ENCODE measurements at regions of chr7 and their contacts with region 1.

Region 1: DNA sequence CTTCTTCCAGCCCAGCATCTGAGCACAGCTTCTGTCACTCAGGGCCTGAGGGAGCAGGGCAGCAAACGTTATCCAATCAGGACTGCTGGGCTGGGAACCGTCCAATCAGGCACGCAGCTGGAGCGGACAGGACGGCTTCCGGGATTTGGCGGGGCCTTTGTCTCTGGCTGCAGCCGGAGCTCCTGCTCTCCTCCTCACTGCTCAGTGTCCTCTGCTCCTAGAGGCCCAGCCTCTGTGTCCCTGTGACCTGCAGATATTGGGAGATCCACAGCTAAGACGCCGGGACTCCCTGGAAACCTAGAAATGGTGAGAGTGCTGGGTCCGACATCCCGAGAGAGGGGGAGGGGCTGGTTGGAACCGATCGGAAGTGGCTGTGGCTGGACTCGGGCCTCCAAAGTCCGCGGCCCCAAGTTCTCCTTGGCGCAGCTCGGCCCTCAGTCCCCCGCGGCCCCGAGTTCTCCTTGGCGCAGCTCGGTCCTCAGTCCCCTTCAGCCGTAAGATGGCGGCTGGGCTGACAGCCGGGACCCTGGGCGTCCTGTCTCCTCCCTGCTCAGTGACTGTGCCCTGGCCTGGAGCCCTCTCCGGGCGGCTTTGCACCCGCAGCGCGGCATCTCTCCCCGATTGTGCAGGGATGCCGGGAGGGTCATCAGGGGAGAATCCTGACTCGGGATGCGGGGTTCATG is at the start of gene ZNF107:
- DNase-seq: peak; percentile 90
- ATAC-seq: peak; percentile 99
- H3K4me3 ChIP-seq: peak within 1 kb of the TSS; percentile 78 to 83
- H3K27ac ChIP-seq: peak within 1 kb of the TSS; percentile 60
- H3K4me1 ChIP-seq: peaks cover 5 to 11% of the 10 kb centered on the region in 2 experiments; a peak in 3 of 4 replicates
- H3K27me3 ChIP-seq: no peaks in the 10 kb centered on the region
- CTCF ChIP-seq: no peak
- POLR2A ChIP-seq: no peak
- RAD21 ChIP-seq: no peak
- total RNA-seq, gene ZNF107: 6.2 TPM

Region 2: GRCh38 chr7:64562626-64563275 is 103.4 kb before region 1 on chr7 and contains the start of gene ZNF680:
- CTCF ChIA-PET with region 1: no interaction called
- POLR2A ChIA-PET with region 1: no interaction called
- RAD21 ChIA-PET with region 1: no interaction called
- intact Hi-C with region 1: loop called (anchors 5 kb)
- DNase-seq: peak; percentile 91
- ATAC-seq: peak; percentile 99
- H3K4me3 ChIP-seq: peak within 1 kb of the TSS; percentile 91 to 93
- H3K27ac ChIP-seq: peak within 1 kb of the TSS; percentile 75
- H3K4me1 ChIP-seq: peaks cover 0 to 5% of the 10 kb centered on the region in 2 experiments; a peak in 1 of 4 replicates
- H3K27me3 ChIP-seq: no peaks in the 10 kb centered on the region
- CTCF ChIP-seq: no peak
- POLR2A ChIP-seq: peak; percentile 78
- RAD21 ChIP-seq: no peak
- total RNA-seq, gene ZNF680: 11.2 TPM

Region 3: GRCh38 chr7:64706625-64707292 is 40.6 kb after region 1 on chr7:
- CTCF ChIA-PET with region 1: no interaction called
- POLR2A ChIA-PET with region 1: no interaction called
- RAD21 ChIA-PET with region 1: no interaction called
- intact Hi-C with region 1: loop called (anchors 5 kb)
- DNase-seq: no peak
- ATAC-seq: no peak
- H3K4me3 ChIP-seq: no peak overlapping the region
- H3K27ac ChIP-seq: no peak overlapping the region
- H3K4me1 ChIP-seq: no peaks in the 10 kb centered on the region
- H3K27me3 ChIP-seq: no peaks in the 10 kb centered on the region
- CTCF ChIP-seq: no peak
- POLR2A ChIP-seq: no peak
- RAD21 ChIP-seq: no peak

Region 4: GRCh38 chr7:64794171-64794844 is 128.2 kb after region 1 on chr7 and contains the start of gene ZNF138:
- CTCF ChIA-PET with region 1: no interaction called
- POLR2A ChIA-PET with region 1: no interaction called
- RAD21 ChIA-PET with region 1: no interaction called
- intact Hi-C with region 1: loop called (anchors 5 kb)
- DNase-seq: peak; percentile 92
- ATAC-seq: peak; percentile 100
- H3K4me3 ChIP-seq: peak within 1 kb of the TSS; percentile 77 to 95
- H3K27ac ChIP-seq: peak within 1 kb of the TSS; percentile 70
- H3K4me1 ChIP-seq: peaks cover 5 to 14% of the 10 kb centered on the region in 2 experiments; a peak in 3 of 4 replicates
- H3K27me3 ChIP-seq: no peaks in the 10 kb centered on the region
- CTCF ChIP-seq: no peak
- POLR2A ChIP-seq: peak; percentile 71
- RAD21 ChIP-seq: no peak
- total RNA-seq, gene ZNF138: 10.1 TPM

Region 5: GRCh38 chr7:64902806-64903721 is 236.9 kb after region 1 on chr7 and contains the start of gene ZNF273:
- CTCF ChIA-PET with region 1: no interaction called
- POLR2A ChIA-PET with region 1: no interaction called
- RAD21 ChIA-PET with region 1: no interaction called
- intact Hi-C with region 1: loop called (anchors 2 kb)
- DNase-seq: peak; percentile 80
- ATAC-seq: peak; percentile 99
- H3K4me3 ChIP-seq: peak within 1 kb of the TSS; percentile 72 to 86
- H3K27ac ChIP-seq: peak within 1 kb of the TSS; percentile 44
- H3K4me1 ChIP-seq: peaks cover 3 to 14% of the 10 kb centered on the region in 2 experiments; a peak in 3 of 4 replicates
- H3K27me3 ChIP-seq: no peaks in the 10 kb centered on the region
- CTCF ChIP-seq: no peak
- POLR2A ChIP-seq: peak; percentile 75
- RAD21 ChIP-seq: no peak
- total RNA-seq, gene ZNF273: 6.6 TPM

Region 6: DNA sequence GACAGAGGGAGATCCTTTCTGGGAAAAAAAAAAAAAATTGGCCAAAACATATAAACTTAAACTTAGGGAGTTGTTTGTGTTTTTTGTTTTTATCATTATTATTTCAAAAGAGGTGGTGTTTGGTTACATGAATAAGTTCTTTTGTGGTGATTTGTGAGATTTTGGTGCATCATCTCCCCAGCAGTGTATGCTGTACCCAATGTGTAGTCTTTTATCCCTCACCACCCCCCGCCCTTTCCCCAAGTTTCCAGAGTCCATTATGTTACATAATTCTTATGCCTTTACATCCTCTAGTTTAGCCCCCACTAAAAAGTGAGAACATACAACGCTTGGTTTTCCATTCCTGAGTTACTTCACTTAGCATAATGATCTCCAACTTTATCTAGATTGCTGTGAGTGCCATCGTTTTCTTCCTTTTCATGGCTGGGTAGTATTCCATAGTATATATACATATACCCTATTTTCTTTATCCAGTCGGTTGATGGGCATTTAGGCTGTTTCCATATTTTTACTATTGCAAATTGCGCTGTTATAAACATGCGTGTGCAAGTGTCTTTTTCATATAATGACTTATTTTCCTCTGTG is 559.4 kb after region 1 on chr7:
- CTCF ChIA-PET with region 1: no interaction called
- POLR2A ChIA-PET with region 1: no interaction called
- RAD21 ChIA-PET with region 1: no interaction called
- intact Hi-C with region 1: loop called (anchors 10 kb)
- DNase-seq: no peak
- ATAC-seq: no peak
- H3K4me3 ChIP-seq: no peak overlapping the region
- H3K27ac ChIP-seq: no peak overlapping the region
- H3K4me1 ChIP-seq: no peaks in the 10 kb centered on the region
- H3K27me3 ChIP-seq: no peaks in the 10 kb centered on the region
- CTCF ChIP-seq: no peak
- POLR2A ChIP-seq: no peak
- RAD21 ChIP-seq: no peak